CD4-positive, alpha-beta memory T cell (primary cell): ENCODE measurements at regions of chr5 and their contacts with region 1.

Region 1: DNA sequence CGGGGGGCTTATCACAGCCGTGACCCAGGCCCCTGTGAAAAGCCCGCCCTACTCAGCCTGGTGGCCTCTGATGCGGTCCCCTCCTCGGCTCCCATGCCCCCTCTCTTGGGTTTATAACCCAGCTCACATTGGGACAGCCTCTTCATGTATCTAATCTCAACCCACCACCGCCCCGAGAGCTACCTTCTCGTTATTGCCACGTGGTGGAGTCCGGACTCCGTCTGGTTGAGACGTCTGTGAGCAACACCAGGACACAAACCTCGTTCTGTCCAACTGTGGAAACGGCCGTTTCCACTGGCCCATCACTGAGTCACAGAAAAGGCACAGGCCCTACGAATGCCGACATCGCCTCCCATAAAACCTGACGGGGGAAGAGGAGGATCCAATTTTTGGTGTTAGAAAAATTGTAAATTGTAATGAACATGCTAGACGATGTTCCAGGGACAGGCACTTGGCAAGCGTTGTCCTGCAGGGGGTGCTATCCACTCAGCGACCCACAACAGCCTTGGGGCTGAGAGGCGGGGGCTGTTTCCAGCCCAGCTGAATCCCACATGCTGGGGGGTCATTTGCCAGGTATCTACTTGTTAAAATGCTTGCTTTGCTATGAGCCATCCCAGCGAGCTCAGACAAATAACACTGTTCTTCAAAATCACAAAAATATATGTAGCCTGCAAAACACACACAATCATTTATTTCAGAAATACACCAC is 37.3 kb upstream of the N4BP3 start:
- DNase-seq: peak; percentile 74 to 78 (median 76)
- H3K4me3 ChIP-seq: no peak overlapping the region
- H3K4me3 Mint-ChIP-seq: no peak overlapping the region
- H3K27ac ChIP-seq: no peak overlapping the region
- H3K27ac Mint-ChIP-seq: peak overlapping the region in 1 of 7 donors; percentile 3
- H3K4me1 ChIP-seq: peaks cover 5% of the 10 kb centered on the region
- H3K4me1 Mint-ChIP-seq: peaks cover 0 to 6% (median 2%) of the 10 kb centered on the region in 4 donors
- H3K27me3 ChIP-seq: peaks cover 3% of the 10 kb centered on the region
- H3K27me3 Mint-ChIP-seq: peaks cover 0 to 3% of the 10 kb centered on the region in 2 donors

Region 2: DNA sequence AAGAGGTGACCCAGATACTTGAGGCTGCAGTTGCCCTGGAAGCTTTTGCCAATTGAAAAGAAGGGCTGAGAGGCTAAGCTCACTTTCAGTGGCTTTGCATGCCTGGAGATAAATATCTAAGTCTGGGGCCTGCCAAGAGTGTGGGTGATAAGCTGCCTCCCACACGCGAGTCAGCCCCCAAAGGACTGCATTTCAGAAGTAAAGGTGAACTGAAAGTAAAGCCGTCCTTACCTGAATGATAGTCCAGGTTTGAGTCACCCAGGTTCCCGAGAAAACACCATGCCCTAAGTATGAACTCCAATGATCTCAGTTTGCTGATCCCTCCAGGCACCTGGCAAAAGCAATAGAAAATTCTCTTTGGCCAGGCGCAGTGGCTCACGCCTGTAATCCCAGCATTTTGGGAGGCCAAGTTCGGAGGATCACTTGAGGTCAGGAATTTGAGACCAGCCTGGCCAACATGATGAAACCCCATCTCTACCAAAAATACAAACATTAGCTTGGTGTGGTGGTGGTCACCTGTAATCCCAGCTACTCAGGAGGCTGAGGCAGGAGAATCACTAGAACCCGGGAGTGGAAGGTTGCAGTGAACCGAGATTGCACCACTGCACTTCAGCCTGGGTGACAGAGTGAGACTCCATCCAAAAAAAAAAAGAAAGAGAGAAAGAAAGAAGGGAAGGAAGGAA is 15.0 kb after region 1 on chr5:
- CTCF ChIA-PET with region 1: interaction called, 23 read pairs
- POLR2A ChIA-PET with region 1: no interaction called
- intact Hi-C with region 1: no loop called
- DNase-seq: no peak
- H3K4me3 ChIP-seq: no peak overlapping the region
- H3K4me3 Mint-ChIP-seq: no peak overlapping the region
- H3K27ac ChIP-seq: no peak overlapping the region
- H3K27ac Mint-ChIP-seq: peak overlapping the region in 2 of 7 donors; percentile 30 to 68
- H3K4me1 ChIP-seq: peaks cover 14% of the 10 kb centered on the region
- H3K4me1 Mint-ChIP-seq: peaks cover 10 to 22% (median 13%) of the 10 kb centered on the region in 4 donors
- H3K27me3 ChIP-seq: no peaks in the 10 kb centered on the region
- H3K27me3 Mint-ChIP-seq: peaks cover 4 to 9% of the 10 kb centered on the region in 2 donors

Region 3: DNA sequence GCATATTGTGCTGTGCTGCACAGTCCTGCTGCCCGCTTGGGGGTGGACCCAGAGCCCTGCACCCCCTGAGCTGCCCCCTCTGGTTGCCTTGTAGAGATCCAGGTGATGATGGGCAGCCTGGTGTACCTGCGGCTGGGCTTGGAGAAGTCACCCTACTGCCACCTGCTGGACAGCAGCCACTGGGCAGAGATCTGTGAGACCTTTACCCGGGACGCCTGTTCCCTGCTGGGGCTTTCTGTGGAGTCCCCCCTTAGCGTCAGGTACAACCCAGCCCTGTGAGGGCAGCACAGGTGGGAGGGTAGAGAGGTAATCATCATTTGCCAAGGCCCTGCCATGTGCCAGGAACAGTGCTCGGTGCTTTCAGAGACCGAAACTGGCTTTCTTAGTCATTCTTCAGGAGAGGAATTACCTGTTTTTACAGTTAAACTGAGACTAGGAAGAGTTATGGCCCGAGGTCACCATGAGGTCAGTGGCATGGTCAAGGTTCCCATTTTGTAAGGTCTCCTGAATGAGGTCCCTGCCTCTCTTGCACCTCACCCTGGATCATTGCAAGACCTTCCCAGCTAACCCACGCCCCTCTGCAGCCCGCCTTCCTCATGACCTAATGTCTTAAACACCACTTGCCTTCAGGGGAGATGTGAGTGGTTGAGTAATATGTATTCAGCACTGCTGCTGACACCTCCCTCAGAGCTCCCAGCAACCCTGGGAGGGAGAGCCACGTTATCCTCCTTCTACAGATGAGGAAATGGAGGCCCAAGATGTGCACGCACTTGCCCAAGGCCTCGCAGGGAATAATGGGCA is 70.2 kb after region 1 on chr5:
- CTCF ChIA-PET with region 1: interaction called, 283 read pairs
- POLR2A ChIA-PET with region 1: no interaction called
- intact Hi-C with region 1: loop called (anchors 1 kb)
- DNase-seq: peak; percentile 71 to 77 (median 74)
- H3K4me3 ChIP-seq: no peak overlapping the region
- H3K4me3 Mint-ChIP-seq: no peak overlapping the region
- H3K27ac ChIP-seq: no peak overlapping the region
- H3K27ac Mint-ChIP-seq: peak overlapping the region in 3 of 7 donors; percentile 41 to 46 (median 45)
- H3K4me1 ChIP-seq: peaks cover 12% of the 10 kb centered on the region
- H3K4me1 Mint-ChIP-seq: peaks cover 8 to 22% (median 10%) of the 10 kb centered on the region in 4 donors
- H3K27me3 ChIP-seq: no peaks in the 10 kb centered on the region
- H3K27me3 Mint-ChIP-seq: no peaks in the 10 kb centered on the region

Region 4: GRCh38 chr5:178163772-178164735 is 88.1 kb after region 1 on chr5:
- CTCF ChIA-PET with region 1: interaction called, 283 read pairs
- POLR2A ChIA-PET with region 1: interaction called, 3 read pairs
- intact Hi-C with region 1: no loop called
- DNase-seq: peak; percentile 86 to 91 (median 88)
- H3K4me3 ChIP-seq: no peak overlapping the region
- H3K4me3 Mint-ChIP-seq: peak overlapping the region in 2 of 8 donors; percentile 22 to 65
- H3K27ac ChIP-seq: no peak overlapping the region
- H3K27ac Mint-ChIP-seq: peak overlapping the region in 3 of 7 donors; percentile 13 to 59 (median 53)
- H3K4me1 ChIP-seq: peaks cover 3% of the 10 kb centered on the region
- H3K4me1 Mint-ChIP-seq: peaks cover 1 to 10% (median 6%) of the 10 kb centered on the region in 4 donors
- H3K27me3 ChIP-seq: no peaks in the 10 kb centered on the region
- H3K27me3 Mint-ChIP-seq: peaks cover 8 to 20% of the 10 kb centered on the region in 2 donors